ENCODE measurements at regions of chr10 and their contacts with region 1.

Region 1: GRCh38 chr10:75390178-75390577 is 11.4 kb downstream of the ZNF503 start:
- DNase-seq: no peak
- H3K4me3 ChIP-seq: no peak overlapping the region
- H3K4me3 Mint-ChIP-seq: no peak overlapping the region
- H3K27ac Mint-ChIP-seq: no peak overlapping the region
- H3K4me1 ChIP-seq: no peaks in the 10 kb centered on the region
- H3K4me1 Mint-ChIP-seq: peaks cover 5% of the 10 kb centered on the region
- H3K27me3 ChIP-seq: no peaks in the 10 kb centered on the region
- H3K27me3 Mint-ChIP-seq: no peaks in the 10 kb centered on the region
- CTCF ChIP-seq: no peak

Region 2: GRCh38 chr10:75367021-75367487 is 23.1 kb before region 1 on chr10:
- CTCF ChIA-PET with region 1: no interaction called
- POLR2A ChIA-PET with region 1: no interaction called
- intact Hi-C with region 1: loop called (anchors 2 kb)
- DNase-seq: no peak
- H3K4me3 ChIP-seq: no peak overlapping the region
- H3K4me3 Mint-ChIP-seq: no peak overlapping the region
- H3K27ac Mint-ChIP-seq: no peak overlapping the region
- H3K4me1 ChIP-seq: no peaks in the 10 kb centered on the region
- H3K4me1 Mint-ChIP-seq: no peaks in the 10 kb centered on the region
- H3K27me3 ChIP-seq: no peaks in the 10 kb centered on the region
- H3K27me3 Mint-ChIP-seq: no peaks in the 10 kb centered on the region
- CTCF ChIP-seq: no peak

Measured in Caco-2 (cell line).